Left ventricle myocardium superior (tissue), 1 donor: ENCODE measurements at regions of chr1 and their contacts with region 1.

Region 1: DNA sequence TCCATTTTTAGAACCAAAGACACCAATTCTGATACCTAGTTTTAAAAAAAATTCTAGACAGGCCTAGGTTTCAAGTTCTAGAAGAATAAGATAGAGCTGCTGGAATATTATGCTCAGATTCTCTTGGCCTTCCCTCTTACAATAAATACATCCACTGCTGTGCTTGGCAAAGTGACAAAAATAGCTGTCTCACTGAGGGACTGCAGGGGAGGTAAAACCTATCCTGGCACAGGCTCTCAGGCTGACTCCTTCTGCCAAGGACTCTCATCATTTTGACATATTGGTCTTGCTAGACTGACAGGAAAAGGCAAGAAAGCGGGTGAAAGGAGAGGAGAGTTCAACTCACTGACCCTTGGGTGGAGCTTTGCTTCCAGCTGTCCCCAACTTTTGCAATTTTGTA is 197.0 kb upstream of the LHX8 start:
- DNase-seq: no peak
- ATAC-seq: no peak

Region 2: GRCh38 chr1:74847715-74848114 is 89.5 kb before region 1 on chr1:
- intact Hi-C with region 1: loop called (anchors 5 kb)
- DNase-seq: no peak
- ATAC-seq: no peak